ENCODE measurements at regions of chr12 and their contacts with region 1.

Region 1: DNA sequence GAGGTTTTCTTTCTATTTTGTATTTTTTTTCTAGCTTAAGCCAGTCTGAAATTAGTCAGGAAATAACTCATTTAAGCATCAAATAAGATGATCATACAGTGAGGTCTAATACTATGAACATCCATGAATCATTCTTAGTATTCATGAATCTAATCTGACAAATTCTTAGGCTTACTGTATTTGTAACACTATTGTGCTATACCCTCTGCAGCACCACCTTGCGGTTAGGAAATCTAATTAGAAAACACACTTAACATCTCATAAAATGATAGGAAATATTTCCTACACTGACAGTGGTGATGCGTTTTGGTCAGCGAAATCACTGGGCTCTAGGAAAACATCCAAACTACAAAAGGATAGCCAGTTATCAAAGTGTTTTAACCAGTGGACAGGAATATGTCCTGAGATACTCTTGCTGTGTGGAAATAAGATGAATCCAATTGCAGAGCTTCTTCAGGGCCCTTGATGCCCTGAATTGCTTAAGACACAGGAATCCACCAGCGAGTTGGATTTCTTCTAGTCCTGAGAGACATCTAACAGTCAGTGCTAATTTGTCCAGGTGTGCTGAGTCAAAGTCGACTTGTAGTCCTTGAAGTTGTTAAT is 109.3 kb upstream of the MYF6 start:
- DNase-seq: peak; percentile 20
- ATAC-seq: peak; percentile 59
- H3K4me3 ChIP-seq: no peak overlapping the region
- H3K27ac ChIP-seq: no peak overlapping the region
- H3K4me1 ChIP-seq: no peaks in the 10 kb centered on the region
- H3K27me3 ChIP-seq: no peaks in the 10 kb centered on the region
- CTCF ChIP-seq: peak; percentile 47; the same call in 1 of the 2 replicates
- EP300 ChIP-seq: no peak
- POLR2A ChIP-seq: no peak
- RAD21 ChIP-seq: no peak

Region 2: DNA sequence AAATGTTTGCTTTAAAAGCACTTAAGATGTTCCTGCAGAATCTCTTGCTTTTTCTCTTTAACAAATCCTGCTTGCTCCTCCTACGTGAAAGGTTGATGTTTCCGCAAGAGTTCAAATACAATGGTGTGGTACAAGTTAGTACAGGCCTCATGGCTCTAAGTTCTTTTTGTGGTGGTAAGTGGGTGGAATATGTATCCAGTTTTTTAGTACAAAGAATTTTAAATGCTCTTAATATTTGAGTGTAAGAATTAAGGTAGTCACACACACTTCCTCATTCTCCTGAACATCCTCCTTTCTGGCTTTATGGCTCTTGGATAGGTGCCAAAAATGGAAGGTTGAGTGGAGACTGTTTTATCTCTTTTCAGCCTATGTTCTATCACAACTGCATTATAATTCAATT is 497.0 kb before region 1 on chr12:
- CTCF ChIA-PET with region 1: no interaction called
- POLR2A ChIA-PET with region 1: no interaction called
- in situ Hi-C with region 1: no loop called
- intact Hi-C with region 1: no loop called
- DNase-seq: no peak
- ATAC-seq: no peak
- H3K4me3 ChIP-seq: no peak overlapping the region
- H3K27ac ChIP-seq: no peak overlapping the region
- H3K4me1 ChIP-seq: no peaks in the 10 kb centered on the region
- H3K27me3 ChIP-seq: no peaks in the 10 kb centered on the region; a peak in 1 of 5 replicates
- CTCF ChIP-seq: no peak
- EP300 ChIP-seq: no peak
- POLR2A ChIP-seq: no peak
- RAD21 ChIP-seq: no peak

Region 3: DNA sequence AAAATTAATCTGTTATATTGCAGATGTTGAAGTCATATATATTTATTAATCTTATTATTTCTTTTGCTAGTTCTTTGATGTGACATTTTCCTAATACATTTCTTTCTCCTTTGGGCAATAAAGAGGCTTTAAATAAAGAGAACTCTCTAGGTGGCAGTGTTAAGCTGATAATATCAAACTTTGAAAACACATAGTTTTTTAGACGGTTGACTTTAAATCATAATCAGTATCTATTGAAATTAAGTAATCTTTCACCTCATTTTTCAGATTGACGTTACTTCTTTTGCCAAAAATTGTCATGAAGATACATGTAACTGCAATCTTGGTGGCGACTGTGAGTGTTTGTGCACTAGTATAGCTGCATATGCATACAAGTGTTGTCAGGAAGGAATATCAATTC is 284.9 kb before region 1 on chr12:
- CTCF ChIA-PET with region 1: no interaction called
- POLR2A ChIA-PET with region 1: no interaction called
- in situ Hi-C with region 1: no loop called
- intact Hi-C with region 1: loop called (anchors 5 kb)
- DNase-seq: no peak
- ATAC-seq: no peak
- H3K4me3 ChIP-seq: no peak overlapping the region
- H3K27ac ChIP-seq: no peak overlapping the region
- H3K4me1 ChIP-seq: no peaks in the 10 kb centered on the region
- H3K27me3 ChIP-seq: no peaks in the 10 kb centered on the region; a peak in 1 of 5 replicates
- CTCF ChIP-seq: no peak
- EP300 ChIP-seq: no peak
- POLR2A ChIP-seq: no peak
- RAD21 ChIP-seq: no peak

Region 4: DNA sequence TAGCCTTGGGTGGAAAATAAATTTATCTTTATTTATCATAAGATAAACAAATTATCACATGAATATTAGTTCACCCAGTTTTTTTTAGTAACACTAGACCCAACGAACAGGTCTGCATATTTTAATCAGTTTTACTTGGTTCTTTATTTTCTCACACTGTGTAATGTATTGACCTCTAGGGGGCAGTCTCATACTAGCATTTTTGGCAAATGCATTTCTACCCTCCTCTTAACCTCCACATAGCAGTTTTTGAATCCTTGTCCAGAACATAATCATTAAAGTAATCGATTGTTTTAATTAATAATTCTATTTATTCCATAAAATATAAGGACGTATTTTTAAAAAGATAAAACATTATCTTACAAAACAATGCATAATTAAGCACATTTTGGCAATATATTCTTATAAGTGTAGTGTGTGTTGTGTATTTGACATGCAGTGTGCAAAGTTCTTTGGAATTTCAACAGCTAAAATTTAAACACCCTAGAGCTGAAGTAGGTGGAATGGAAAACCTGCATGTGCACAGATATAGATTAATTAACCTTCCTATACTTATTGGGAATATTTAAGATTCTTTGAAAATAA is 185.6 kb before region 1 on chr12:
- CTCF ChIA-PET with region 1: interaction called, 12 read pairs
- POLR2A ChIA-PET with region 1: no interaction called
- in situ Hi-C with region 1: no loop called
- intact Hi-C with region 1: loop called (anchors 1 kb)
- DNase-seq: peak; percentile 40
- ATAC-seq: peak; percentile 71; the same call in 2 of the 3 replicates
- H3K4me3 ChIP-seq: no peak overlapping the region
- H3K27ac ChIP-seq: no peak overlapping the region
- H3K4me1 ChIP-seq: no peaks in the 10 kb centered on the region
- H3K27me3 ChIP-seq: no peaks in the 10 kb centered on the region
- CTCF ChIP-seq: peak; percentile 64
- EP300 ChIP-seq: no peak
- POLR2A ChIP-seq: no peak
- RAD21 ChIP-seq: 0 out of 2 replicates have a peak, but pooled peaks have one; percentile 19

Region 5: GRCh38 chr12:80472902-80473500 is 125.1 kb before region 1 on chr12:
- CTCF ChIA-PET with region 1: interaction called, 8 read pairs
- POLR2A ChIA-PET with region 1: no interaction called
- in situ Hi-C with region 1: no loop called
- intact Hi-C with region 1: loop called (anchors 1 kb)
- DNase-seq: peak; percentile 35
- ATAC-seq: peak; percentile 65; the same call in 2 of the 3 replicates
- H3K4me3 ChIP-seq: no peak overlapping the region
- H3K27ac ChIP-seq: no peak overlapping the region
- H3K4me1 ChIP-seq: no peaks in the 10 kb centered on the region
- H3K27me3 ChIP-seq: no peaks in the 10 kb centered on the region
- CTCF ChIP-seq: peak; percentile 69
- EP300 ChIP-seq: no peak
- POLR2A ChIP-seq: no peak
- RAD21 ChIP-seq: peak; percentile 40; the same call in 1 of the 2 replicates

Measured in HepG2 (cell line).